ENCODE measurements at regions of chr10 and their contacts with region 1.

Region 1: GRCh38 chr10:115682482-115682881 is 589.3 kb downstream of the ATRNL1 start:
- DNase-seq: no peak
- ATAC-seq: no peak
- H3K4me3 ChIP-seq: no peak overlapping the region
- H3K4me3 Mint-ChIP-seq: no peak overlapping the region
- H3K27ac ChIP-seq: no peak overlapping the region
- H3K27ac Mint-ChIP-seq: no peak overlapping the region
- H3K4me1 ChIP-seq: no peaks in the 10 kb centered on the region
- H3K4me1 Mint-ChIP-seq: no peaks in the 10 kb centered on the region
- H3K27me3 ChIP-seq: no peaks in the 10 kb centered on the region
- H3K27me3 Mint-ChIP-seq: no peaks in the 10 kb centered on the region
- CTCF ChIP-seq: no peak

Region 2: DNA sequence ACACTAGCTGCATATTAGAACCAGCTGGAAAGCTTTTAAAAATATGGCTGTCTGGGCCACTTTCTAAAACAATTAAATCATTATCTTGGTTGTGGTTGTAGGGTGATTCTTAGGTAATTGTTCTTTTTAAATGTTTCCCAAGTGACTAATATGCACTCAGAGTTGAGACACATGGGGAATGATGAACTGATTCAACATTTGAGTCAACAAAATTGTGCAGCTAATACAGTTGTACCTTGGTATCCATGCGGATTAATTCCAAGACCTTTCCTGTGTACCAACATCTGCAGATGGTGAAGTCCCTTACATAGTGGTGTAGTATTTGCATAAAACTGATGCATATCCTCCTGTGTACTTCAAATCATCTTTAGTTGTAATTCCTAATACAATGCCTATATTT is 347.1 kb before region 1 on chr10:
- CTCF ChIA-PET with region 1: no interaction called
- POLR2A ChIA-PET with region 1: no interaction called
- intact Hi-C with region 1: no loop called
- DNase-seq: no peak
- ATAC-seq: no peak
- H3K4me3 ChIP-seq: no peak overlapping the region
- H3K4me3 Mint-ChIP-seq: no peak overlapping the region
- H3K27ac ChIP-seq: no peak overlapping the region
- H3K27ac Mint-ChIP-seq: no peak overlapping the region
- H3K4me1 ChIP-seq: no peaks in the 10 kb centered on the region
- H3K4me1 Mint-ChIP-seq: no peaks in the 10 kb centered on the region
- H3K27me3 ChIP-seq: no peaks in the 10 kb centered on the region
- H3K27me3 Mint-ChIP-seq: no peaks in the 10 kb centered on the region
- CTCF ChIP-seq: no peak

Region 3: DNA sequence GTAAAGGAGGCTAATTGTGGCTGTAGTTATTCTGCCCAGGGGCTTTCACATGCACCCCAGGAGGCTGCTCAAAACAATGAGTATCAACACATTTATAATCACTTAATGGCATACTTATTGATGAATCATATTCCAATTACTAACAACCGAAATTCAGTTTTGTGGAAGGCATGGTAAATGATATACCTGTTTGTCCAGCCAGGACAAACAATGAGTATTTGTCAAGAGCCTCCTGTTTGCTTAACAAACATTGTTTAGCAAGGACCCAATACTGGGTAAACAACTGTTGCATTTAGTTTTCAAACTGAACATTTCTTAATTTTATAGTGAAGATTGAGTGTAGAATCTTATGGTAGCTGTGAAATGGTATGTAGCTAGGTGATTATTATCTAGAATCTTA is 115.7 kb before region 1 on chr10:
- CTCF ChIA-PET with region 1: no interaction called
- POLR2A ChIA-PET with region 1: no interaction called
- intact Hi-C with region 1: loop called in 1 of 2 experiments (anchors 10 kb)
- DNase-seq: no peak
- ATAC-seq: no peak
- H3K4me3 ChIP-seq: no peak overlapping the region
- H3K4me3 Mint-ChIP-seq: no peak overlapping the region
- H3K27ac ChIP-seq: no peak overlapping the region
- H3K27ac Mint-ChIP-seq: no peak overlapping the region
- H3K4me1 ChIP-seq: no peaks in the 10 kb centered on the region
- H3K4me1 Mint-ChIP-seq: no peaks in the 10 kb centered on the region
- H3K27me3 ChIP-seq: no peaks in the 10 kb centered on the region
- H3K27me3 Mint-ChIP-seq: no peaks in the 10 kb centered on the region
- CTCF ChIP-seq: no peak

Measured in CD8-positive, alpha-beta T cell (primary cell).